ENCODE measurements at regions of chr7 and their contacts with region 1.

Region 1: GRCh38 chr7:107816011-107816566 is 13.1 kb upstream of the SLC26A3 start:
- DNase-seq: no peak
- ATAC-seq: no peak
- H3K4me3 Mint-ChIP-seq: no peak overlapping the region
- H3K27ac Mint-ChIP-seq: peak overlapping the region; percentile 81
- H3K4me1 Mint-ChIP-seq: peaks cover 35% of the 10 kb centered on the region
- H3K27me3 Mint-ChIP-seq: no peaks in the 10 kb centered on the region

Region 2: DNA sequence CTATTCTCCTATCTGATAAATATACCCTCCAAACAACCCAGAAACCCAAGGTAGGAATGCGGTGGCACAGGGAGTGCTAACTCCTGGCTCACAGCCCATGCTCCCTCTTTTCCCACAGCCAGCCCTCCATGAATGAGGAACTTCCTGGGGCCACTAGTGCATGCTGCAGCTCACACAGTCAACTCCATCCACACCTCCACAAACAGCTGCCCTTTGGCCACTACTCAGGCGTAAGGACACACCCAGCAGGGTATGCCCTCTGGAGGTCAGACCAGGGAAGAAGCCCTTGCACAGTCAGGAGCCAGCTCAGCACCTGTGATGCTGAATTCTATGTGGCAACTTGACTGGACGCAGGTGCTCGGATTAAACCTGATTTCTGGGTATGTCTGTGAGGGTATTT is 1036.2 kb before region 1 on chr7:
- CTCF ChIA-PET with region 1: no interaction called
- POLR2A ChIA-PET with region 1: no interaction called
- intact Hi-C with region 1: loop called in 1 of 2 experiments (anchors 10 kb)
- DNase-seq: peak; percentile 34
- ATAC-seq: peak; percentile 30
- H3K4me3 Mint-ChIP-seq: no peak overlapping the region
- H3K27ac Mint-ChIP-seq: no peak overlapping the region
- H3K4me1 Mint-ChIP-seq: peaks cover 17% of the 10 kb centered on the region
- H3K27me3 Mint-ChIP-seq: no peaks in the 10 kb centered on the region

Region 3: GRCh38 chr7:107865956-107866775 is 50.1 kb after region 1 on chr7:
- CTCF ChIA-PET with region 1: no interaction called
- POLR2A ChIA-PET with region 1: no interaction called
- intact Hi-C with region 1: loop called (anchors 1 kb)
- DNase-seq: peak; percentile 55
- ATAC-seq: peak; percentile 79
- H3K4me3 Mint-ChIP-seq: peak overlapping the region; percentile 34
- H3K27ac Mint-ChIP-seq: peak overlapping the region; percentile 83
- H3K4me1 Mint-ChIP-seq: peaks cover 24% of the 10 kb centered on the region
- H3K27me3 Mint-ChIP-seq: no peaks in the 10 kb centered on the region

Region 4: GRCh38 chr7:108569381-108570145 is 753.5 kb after region 1 on chr7 and contains the starts of genes DNAJB9 and THAP5:
- CTCF ChIA-PET with region 1: no interaction called
- POLR2A ChIA-PET with region 1: no interaction called
- intact Hi-C with region 1: loop called in 1 of 2 experiments (anchors 10 kb)
- DNase-seq: peak; percentile 99
- ATAC-seq: peak; percentile 91
- H3K4me3 Mint-ChIP-seq: peak within 1 kb of the TSS; percentile 98
- H3K27ac Mint-ChIP-seq: peak within 1 kb of the TSS; percentile 99
- H3K4me1 Mint-ChIP-seq: peaks cover 40% of the 10 kb centered on the region
- H3K27me3 Mint-ChIP-seq: no peaks in the 10 kb centered on the region
- total RNA-seq, gene DNAJB9: 8.3 to 8.4 TPM
- total RNA-seq, gene THAP5: 30.1 to 43.4 TPM

Measured in activated CD4-positive, alpha-beta T cell treated with anti-CD3 and anti-CD28 coated beads for 36 hours (primary cell).